Mammary epithelial cell (primary cell): ENCODE measurements at regions of chr2 and their contacts with region 1.

Region 1: DNA sequence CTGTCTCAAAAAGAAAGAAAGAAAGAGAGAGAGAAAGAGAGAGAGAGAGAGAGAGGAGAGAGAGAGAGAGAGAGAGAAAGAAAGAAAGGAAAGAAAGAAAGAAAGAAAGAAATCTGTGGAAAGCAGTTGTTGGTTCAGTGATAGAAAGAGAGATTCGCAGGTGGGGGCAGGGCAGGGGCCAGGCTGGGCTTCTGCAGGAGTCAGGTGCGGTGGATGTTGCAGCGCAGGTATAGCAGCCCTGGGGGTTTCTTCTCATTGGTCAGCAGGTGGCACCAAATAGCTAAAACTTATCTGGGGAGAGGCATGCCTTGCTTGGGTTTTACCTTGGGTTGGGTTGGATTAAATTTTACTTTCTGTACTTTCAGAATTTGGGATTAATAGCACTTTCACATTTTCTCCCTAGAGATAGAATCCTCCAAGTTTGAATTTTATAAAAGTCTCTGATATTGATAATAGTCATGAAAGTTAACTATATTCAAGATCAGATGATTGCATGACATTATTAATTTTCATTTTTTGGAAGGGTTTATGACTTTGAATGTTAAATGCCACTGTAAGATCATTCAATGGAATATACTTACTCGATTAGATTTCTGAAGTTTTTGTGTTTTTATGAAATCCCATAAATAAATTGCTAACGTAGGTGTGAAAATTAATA is 66.6 kb downstream of the SPTBN1 start:
- DNase-seq: peak; percentile 72
- H3K4me3 ChIP-seq: no peak overlapping the region
- H3K27ac ChIP-seq: peak overlapping the region; percentile 49
- H3K4me1 ChIP-seq: peaks cover 46% of the 10 kb centered on the region
- H3K27me3 ChIP-seq: no peaks in the 10 kb centered on the region
- CTCF ChIP-seq: peak; percentile 73 to 78

Region 2: GRCh38 chr2:54115284-54116137 is 407.2 kb before region 1 on chr2 and contains the start of gene ACYP2:
- CTCF ChIA-PET with region 1: no interaction called
- dilution Hi-C with region 1: no loop called
- in situ Hi-C with region 1: loop called in 1 of 2 experiments (anchors 25 kb)
- intact Hi-C with region 1: no loop called
- DNase-seq: peak; percentile 87
- H3K4me3 ChIP-seq: peak within 1 kb of the TSS; percentile 68 to 73 (median 70)
- H3K27ac ChIP-seq: peak within 1 kb of the TSS; percentile 91
- H3K4me1 ChIP-seq: no peaks in the 10 kb centered on the region
- H3K27me3 ChIP-seq: no peaks in the 10 kb centered on the region
- CTCF ChIP-seq: peak in 1 of 2 donors; percentile 51
- total RNA-seq, gene ACYP2: 14.0 to 19.3 TPM

Region 3: DNA sequence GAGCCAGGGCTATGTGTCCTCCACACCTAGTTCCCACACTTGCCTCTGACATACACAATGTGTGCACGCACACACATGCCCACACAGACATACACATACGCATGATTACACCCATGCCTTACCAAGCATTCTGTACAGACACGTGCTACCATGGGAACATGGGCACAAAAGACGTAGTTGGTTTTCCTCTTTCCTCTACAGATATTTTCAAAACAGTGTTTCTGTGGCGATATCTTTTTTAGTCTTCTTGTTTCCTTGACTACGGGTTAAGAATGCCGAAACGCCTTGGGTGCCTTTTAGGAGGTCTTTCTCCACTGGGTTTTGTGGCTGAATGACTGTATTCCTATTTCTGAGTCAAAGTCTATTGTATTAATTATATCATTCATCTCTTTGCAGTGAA is 142.1 kb before region 1 on chr2:
- CTCF ChIA-PET with region 1: no interaction called
- dilution Hi-C with region 1: no loop called
- in situ Hi-C with region 1: no loop called
- intact Hi-C with region 1: no loop called
- DNase-seq: no peak
- H3K4me3 ChIP-seq: no peak overlapping the region
- H3K27ac ChIP-seq: no peak overlapping the region
- H3K4me1 ChIP-seq: no peaks in the 10 kb centered on the region
- H3K27me3 ChIP-seq: no peaks in the 10 kb centered on the region
- CTCF ChIP-seq: no peak

Region 4: DNA sequence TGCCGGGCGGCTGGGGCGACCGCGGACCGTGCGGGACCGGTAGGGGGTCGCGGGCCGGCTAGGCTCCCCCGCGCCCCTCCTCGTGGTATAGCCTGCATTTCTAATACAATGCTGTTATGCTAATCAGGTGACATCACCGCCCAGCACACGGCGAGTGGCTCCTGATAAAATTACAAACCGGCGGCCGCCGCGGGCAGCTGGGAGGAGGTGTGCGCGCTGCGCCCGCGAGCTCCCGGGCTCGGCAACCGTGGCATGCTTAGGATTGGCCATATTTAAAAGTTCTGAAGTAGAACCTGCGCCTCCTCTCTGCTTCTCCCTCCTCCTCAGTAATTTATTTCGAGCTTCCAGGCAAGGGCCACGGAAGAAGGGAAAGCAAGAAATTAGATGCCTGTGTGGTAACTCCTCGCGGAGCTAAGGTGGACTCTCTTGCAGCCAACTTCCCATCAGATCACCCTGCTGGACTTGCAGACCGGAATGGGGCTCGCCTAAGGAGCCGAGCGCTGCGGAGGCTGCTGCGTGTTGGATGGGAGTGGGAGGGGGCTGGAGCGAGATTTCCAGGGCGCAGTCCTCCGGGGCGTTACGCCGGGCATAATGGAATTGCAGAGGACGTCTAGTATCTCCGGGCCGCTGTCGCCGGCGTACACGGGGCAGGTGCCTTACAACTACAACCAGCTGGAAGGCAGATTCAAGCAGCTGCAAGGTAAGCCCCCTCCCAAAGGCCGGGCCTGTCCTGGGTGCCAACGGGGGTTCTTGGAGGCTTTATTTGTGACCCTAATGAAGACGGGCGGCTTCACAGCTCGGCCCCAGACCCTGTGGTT is 35.6 kb after region 1 on chr2:
- CTCF ChIA-PET with region 1: interaction called, 4 read pairs
- dilution Hi-C with region 1: loop called (anchors 5 kb)
- in situ Hi-C with region 1: no loop called
- intact Hi-C with region 1: loop called (anchors 1 kb)
- DNase-seq: peak; percentile 79
- H3K4me3 ChIP-seq: peak overlapping the region; percentile 75 to 87 (median 80)
- H3K27ac ChIP-seq: peak overlapping the region; percentile 97
- H3K4me1 ChIP-seq: peaks cover 41% of the 10 kb centered on the region
- H3K27me3 ChIP-seq: no peaks in the 10 kb centered on the region
- CTCF ChIP-seq: no peak

Region 5: DNA sequence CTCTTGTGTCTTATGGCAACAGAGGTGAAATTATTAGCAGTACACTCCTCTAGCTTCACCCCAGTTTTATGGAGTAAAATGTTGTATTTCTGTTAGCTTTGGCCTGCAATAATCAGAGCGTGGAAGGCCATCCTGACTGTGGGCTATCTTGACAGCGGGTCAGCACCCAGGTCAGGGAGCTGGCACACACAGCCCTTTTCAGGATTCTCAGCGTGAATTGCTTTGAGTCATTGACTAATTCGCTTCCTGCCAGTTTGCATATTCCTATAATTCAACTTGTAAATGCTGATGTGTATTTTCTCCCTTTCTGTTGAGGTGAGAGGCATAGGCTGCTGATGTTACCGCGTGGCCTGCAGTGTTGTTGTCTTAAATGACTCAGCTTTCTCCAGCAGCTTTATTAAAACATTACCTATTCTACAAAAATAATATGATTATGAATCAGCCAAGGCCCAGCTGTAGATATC is 91.1 kb after region 1 on chr2:
- CTCF ChIA-PET with region 1: no interaction called
- dilution Hi-C with region 1: no loop called
- in situ Hi-C with region 1: no loop called
- intact Hi-C with region 1: loop called (anchors 1 kb)
- DNase-seq: peak; percentile 82
- H3K4me3 ChIP-seq: no peak overlapping the region
- H3K27ac ChIP-seq: peak overlapping the region; percentile 13
- H3K4me1 ChIP-seq: peaks cover 8% of the 10 kb centered on the region
- H3K27me3 ChIP-seq: no peaks in the 10 kb centered on the region
- CTCF ChIP-seq: no peak

Region 6: DNA sequence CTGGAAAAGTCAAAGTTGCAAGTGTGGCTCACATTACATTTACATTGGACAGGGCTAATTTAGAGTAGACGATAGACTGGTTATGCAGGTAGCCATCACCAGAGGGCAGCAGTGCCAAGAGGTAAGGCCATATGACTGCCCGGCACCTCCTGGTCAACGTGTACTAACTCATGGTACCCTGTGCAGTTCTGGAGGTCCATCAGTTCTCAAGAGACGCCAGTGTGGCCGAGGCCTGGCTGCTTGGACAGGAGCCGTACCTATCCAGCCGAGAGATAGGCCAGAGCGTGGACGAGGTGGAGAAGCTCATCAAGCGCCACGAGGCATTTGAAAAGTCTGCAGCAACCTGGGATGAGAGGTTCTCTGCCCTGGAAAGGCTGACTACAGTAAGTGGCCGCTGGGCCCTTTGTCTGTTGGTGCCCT is 134.9 kb after region 1 on chr2:
- CTCF ChIA-PET with region 1: no interaction called
- dilution Hi-C with region 1: no loop called
- in situ Hi-C with region 1: no loop called
- intact Hi-C with region 1: loop called (anchors 2 kb)
- DNase-seq: no peak
- H3K4me3 ChIP-seq: no peak overlapping the region
- H3K27ac ChIP-seq: no peak overlapping the region
- H3K4me1 ChIP-seq: no peaks in the 10 kb centered on the region
- H3K27me3 ChIP-seq: no peaks in the 10 kb centered on the region
- CTCF ChIP-seq: peak; percentile 44 to 63

Region 7: GRCh38 chr2:54838585-54839035 is 315.9 kb after region 1 on chr2:
- CTCF ChIA-PET with region 1: no interaction called
- dilution Hi-C with region 1: no loop called
- in situ Hi-C with region 1: no loop called
- intact Hi-C with region 1: loop called (anchors 5 kb)
- DNase-seq: peak; percentile 50
- H3K4me3 ChIP-seq: no peak overlapping the region
- H3K27ac ChIP-seq: no peak overlapping the region
- H3K4me1 ChIP-seq: peaks cover 8% of the 10 kb centered on the region
- H3K27me3 ChIP-seq: no peaks in the 10 kb centered on the region
- CTCF ChIP-seq: peak; percentile 79 to 90